Activated B cell treated with CpG ODN at 0.5 μM for 24 hours (primary cell): ENCODE measurements at regions of chr10 and their contacts with region 1.

Region 1: GRCh38 chr10:17655567-17656146 is 11.7 kb downstream of the STAM start:
- DNase-seq: no peak
- ATAC-seq: peak; percentile 91
- H3K4me3 Mint-ChIP-seq: peak overlapping the region; percentile 50
- H3K27ac Mint-ChIP-seq: peak overlapping the region; percentile 70
- H3K4me1 Mint-ChIP-seq: peaks cover 59% of the 10 kb centered on the region
- H3K27me3 Mint-ChIP-seq: no peaks in the 10 kb centered on the region
- CTCF ChIP-seq: no peak

Region 2: GRCh38 chr10:17617031-17617911 is 38.4 kb before region 1 on chr10 and contains the start of gene HACD1:
- CTCF ChIA-PET with region 1: no interaction called
- POLR2A ChIA-PET with region 1: interaction called, 3 read pairs
- intact Hi-C with region 1: loop called (anchors 5 kb)
- DNase-seq: peak; percentile 37
- ATAC-seq: peak; percentile 74
- H3K4me3 Mint-ChIP-seq: peak within 1 kb of the TSS; percentile 82
- H3K27ac Mint-ChIP-seq: no peak within 1 kb of the TSS
- H3K4me1 Mint-ChIP-seq: peaks cover 9% of the 10 kb centered on the region
- H3K27me3 Mint-ChIP-seq: peaks cover 16% of the 10 kb centered on the region
- CTCF ChIP-seq: no peak
- total RNA-seq, gene HACD1: 1.8 and 2.6 TPM in 2 replicates

Region 3: GRCh38 chr10:17673456-17674061 is 17.9 kb after region 1 on chr10:
- CTCF ChIA-PET with region 1: no interaction called
- POLR2A ChIA-PET with region 1: interaction called, 7 read pairs
- intact Hi-C with region 1: loop called (anchors 1 kb)
- DNase-seq: no peak
- ATAC-seq: no peak
- H3K4me3 Mint-ChIP-seq: no peak overlapping the region
- H3K27ac Mint-ChIP-seq: no peak overlapping the region
- H3K4me1 Mint-ChIP-seq: peaks cover 38% of the 10 kb centered on the region
- H3K27me3 Mint-ChIP-seq: no peaks in the 10 kb centered on the region
- CTCF ChIP-seq: no peak

Region 4: DNA sequence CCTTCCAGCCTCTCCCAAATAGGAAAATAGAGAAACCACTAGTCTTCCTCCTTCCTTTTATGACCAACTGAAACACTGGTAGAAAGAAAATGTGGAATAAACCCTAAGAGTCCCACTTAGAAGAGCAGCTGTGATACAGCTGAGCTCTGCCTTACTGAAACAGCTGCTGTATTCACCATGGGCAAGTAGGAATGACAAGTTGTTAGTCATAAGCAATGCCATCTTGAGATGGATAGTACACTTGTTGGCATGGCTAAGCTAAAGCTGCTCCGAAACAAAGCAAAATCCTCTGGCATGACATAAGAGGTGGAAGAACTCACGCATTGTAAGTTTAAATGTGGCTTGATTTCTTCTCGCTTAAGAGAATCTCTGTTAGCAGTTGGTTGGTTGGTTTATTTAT is 48.0 kb after region 1 on chr10:
- CTCF ChIA-PET with region 1: no interaction called
- POLR2A ChIA-PET with region 1: no interaction called
- intact Hi-C with region 1: no loop called
- DNase-seq: no peak
- ATAC-seq: no peak
- H3K4me3 Mint-ChIP-seq: no peak overlapping the region
- H3K27ac Mint-ChIP-seq: no peak overlapping the region
- H3K4me1 Mint-ChIP-seq: no peaks in the 10 kb centered on the region
- H3K27me3 Mint-ChIP-seq: no peaks in the 10 kb centered on the region
- CTCF ChIP-seq: no peak

Region 5: DNA sequence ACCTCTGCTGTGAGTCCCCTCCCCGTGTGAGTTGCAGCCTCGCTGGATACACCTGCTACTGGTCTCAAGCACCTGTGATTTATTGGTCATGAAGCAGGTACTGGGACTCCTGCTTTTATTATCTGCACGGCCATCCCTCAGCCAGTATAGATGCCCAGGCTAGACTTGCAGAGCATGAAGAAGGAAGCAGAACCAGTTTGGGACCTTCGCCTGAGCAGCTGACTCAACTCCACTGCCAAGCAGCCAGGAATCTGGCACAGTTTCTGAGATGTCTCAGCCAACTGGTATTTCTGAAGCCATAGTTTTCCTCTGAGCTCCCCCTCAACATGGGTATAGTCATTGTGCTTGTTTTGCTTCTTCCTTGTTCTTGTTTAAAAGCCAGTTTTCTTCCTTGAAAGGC is 268.1 kb after region 1 on chr10:
- CTCF ChIA-PET with region 1: no interaction called
- POLR2A ChIA-PET with region 1: no interaction called
- intact Hi-C with region 1: no loop called
- DNase-seq: no peak
- ATAC-seq: no peak
- H3K4me3 Mint-ChIP-seq: no peak overlapping the region
- H3K27ac Mint-ChIP-seq: no peak overlapping the region
- H3K4me1 Mint-ChIP-seq: no peaks in the 10 kb centered on the region
- H3K27me3 Mint-ChIP-seq: no peaks in the 10 kb centered on the region
- CTCF ChIP-seq: no peak

Region 6: GRCh38 chr10:18059826-18060559 is 404.3 kb after region 1 on chr10:
- CTCF ChIA-PET with region 1: no interaction called
- POLR2A ChIA-PET with region 1: no interaction called
- intact Hi-C with region 1: no loop called
- DNase-seq: no peak
- ATAC-seq: no peak
- H3K4me3 Mint-ChIP-seq: no peak overlapping the region
- H3K27ac Mint-ChIP-seq: no peak overlapping the region
- H3K4me1 Mint-ChIP-seq: no peaks in the 10 kb centered on the region
- H3K27me3 Mint-ChIP-seq: no peaks in the 10 kb centered on the region
- CTCF ChIP-seq: no peak

Region 7: GRCh38 chr10:18659120-18659818 is 1003.6 kb after region 1 on chr10 and contains the start of gene ARL5B:
- CTCF ChIA-PET with region 1: no interaction called
- POLR2A ChIA-PET with region 1: no interaction called
- intact Hi-C with region 1: loop called (anchors 5 kb)
- DNase-seq: peak; percentile 94
- ATAC-seq: peak; percentile 97
- H3K4me3 Mint-ChIP-seq: peak within 1 kb of the TSS; percentile 98
- H3K27ac Mint-ChIP-seq: peak within 1 kb of the TSS; percentile 97
- H3K4me1 Mint-ChIP-seq: peaks cover 41% of the 10 kb centered on the region
- H3K27me3 Mint-ChIP-seq: no peaks in the 10 kb centered on the region
- CTCF ChIP-seq: no peak
- total RNA-seq, gene ARL5B: 9.4 and 10.6 TPM in 2 replicates